ENCODE measurements at regions of chr12 and their contacts with region 1.

Region 1: DNA sequence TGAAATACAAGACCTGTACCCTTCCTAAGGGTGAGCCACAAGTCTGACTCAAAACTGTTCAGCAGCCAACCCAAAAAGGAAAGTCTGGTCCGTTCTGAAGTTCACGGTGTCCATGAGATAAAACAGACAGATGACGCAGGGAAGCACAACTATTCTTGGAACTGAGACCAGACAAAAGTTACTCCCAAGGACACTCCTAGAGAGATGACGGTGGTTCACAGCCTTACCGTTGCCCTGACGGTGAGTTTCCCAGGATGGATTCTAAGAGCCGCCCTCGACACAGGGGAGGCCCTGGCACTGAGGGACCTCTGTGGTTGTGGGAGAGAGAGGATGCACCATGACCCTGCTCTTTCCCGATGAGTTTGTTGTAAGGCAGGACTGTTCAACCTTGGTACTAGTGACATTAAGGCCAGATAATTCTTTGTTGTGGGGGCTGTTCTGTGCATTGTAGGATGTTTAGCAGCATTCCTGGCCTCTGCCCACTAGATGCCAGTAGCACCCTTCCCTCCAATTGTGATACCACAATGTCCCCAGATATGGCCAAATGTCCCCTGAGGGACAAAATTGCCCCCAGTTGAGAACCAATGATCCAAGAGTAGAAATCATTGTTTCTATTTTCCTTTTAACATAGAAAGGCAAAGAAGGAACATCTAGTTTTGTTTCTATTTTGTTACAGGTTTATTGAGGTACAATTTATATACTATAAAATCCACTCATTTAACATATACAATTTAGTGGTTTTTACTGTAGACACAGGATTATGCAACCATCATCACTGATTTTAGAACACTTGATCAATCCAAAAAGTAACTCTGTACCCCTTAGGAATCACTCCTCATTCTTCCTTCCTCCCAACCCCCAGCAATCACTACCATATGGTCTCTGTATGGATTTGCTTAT is 23.0 kb downstream of the OR10P1 start:
- DNase-seq: peak; percentile 36
- H3K4me3 ChIP-seq: no peak overlapping the region
- H3K27ac ChIP-seq: no peak overlapping the region
- H3K4me1 ChIP-seq: no peaks in the 10 kb centered on the region
- H3K27me3 ChIP-seq: peaks cover 15% of the 10 kb centered on the region; the same call in 1 of the 2 replicates
- CTCF ChIP-seq: peak; percentile 66
- EP300 ChIP-seq: no peak
- RAD21 ChIP-seq: peak; percentile 82

Region 2: DNA sequence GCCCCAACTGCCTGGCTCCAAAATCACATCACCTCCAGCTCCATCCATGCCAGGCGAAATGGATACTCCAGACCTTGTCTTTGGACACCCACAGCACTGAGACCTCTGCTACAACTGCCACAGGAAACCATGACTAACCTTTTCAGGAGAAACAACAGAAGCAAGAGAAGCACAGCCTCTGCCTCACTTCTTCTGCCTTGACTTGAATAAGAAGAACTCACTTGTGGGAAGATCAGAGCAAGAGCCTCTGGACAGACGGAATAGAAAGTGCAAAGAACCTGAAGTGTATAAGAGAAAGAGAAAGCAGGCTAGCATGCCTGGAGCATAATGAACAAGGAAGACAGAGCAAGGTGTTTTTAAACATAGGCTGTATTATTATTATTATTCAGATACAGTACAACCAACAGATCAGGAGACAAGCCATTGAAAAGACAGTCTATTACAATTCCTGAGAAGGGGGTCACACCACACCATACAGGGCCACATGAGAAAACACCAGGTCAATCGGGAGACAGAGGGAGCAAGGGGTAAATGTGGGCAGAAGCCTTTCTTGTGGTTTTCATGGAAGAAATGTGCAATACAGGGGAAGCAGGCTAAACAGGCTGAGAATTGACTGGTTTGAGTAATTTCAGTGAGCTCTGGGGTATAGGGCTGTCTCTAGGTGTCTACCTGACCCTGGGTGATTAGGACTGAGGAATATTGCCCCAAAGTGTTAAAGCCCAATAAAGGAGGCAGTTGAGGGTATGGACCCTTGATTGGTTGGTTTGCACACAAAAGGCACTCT is 30.5 kb before region 1 on chr12:
- CTCF ChIA-PET with region 1: interaction called, 12 read pairs
- POLR2A ChIA-PET with region 1: no interaction called
- DNase-seq: no peak
- H3K4me3 ChIP-seq: no peak overlapping the region
- H3K27ac ChIP-seq: no peak overlapping the region
- H3K4me1 ChIP-seq: no peaks in the 10 kb centered on the region
- H3K27me3 ChIP-seq: peaks cover 70% of the 10 kb centered on the region; the same call in 1 of the 2 replicates
- CTCF ChIP-seq: no peak
- EP300 ChIP-seq: no peak
- RAD21 ChIP-seq: no peak

Region 3: DNA sequence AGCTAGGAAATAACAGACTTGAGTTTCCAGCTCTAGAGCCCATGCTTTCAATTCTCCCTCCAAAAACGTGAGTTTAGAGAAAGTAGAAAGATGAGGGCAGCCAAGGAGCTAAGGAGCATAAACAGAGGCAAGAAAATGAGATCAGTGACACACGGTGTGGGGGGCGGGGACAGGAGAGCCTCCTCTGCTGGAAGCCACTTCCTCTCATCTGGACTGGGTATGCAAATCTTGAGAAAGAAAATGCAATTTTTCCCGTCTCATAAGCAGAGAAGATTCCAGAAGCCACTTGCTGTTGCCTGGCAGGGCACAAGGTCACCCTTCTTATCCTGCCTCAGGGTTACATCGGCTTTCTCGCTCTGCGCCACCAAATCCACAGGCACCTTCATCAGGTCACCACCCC is 17.1 kb before region 1 on chr12:
- CTCF ChIA-PET with region 1: interaction called, 91 read pairs
- POLR2A ChIA-PET with region 1: interaction called, 5 read pairs
- DNase-seq: no peak
- H3K4me3 ChIP-seq: no peak overlapping the region
- H3K27ac ChIP-seq: no peak overlapping the region
- H3K4me1 ChIP-seq: peaks cover 0 to 3% of the 10 kb centered on the region in 2 experiments; a peak in 1 of 4 replicates
- H3K27me3 ChIP-seq: peaks cover 37% of the 10 kb centered on the region
- CTCF ChIP-seq: no peak
- EP300 ChIP-seq: no peak
- RAD21 ChIP-seq: no peak

Region 4: GRCh38 chr12:55670276-55670675 is 10.5 kb after region 1 on chr12:
- CTCF ChIA-PET with region 1: interaction called, 22 read pairs
- POLR2A ChIA-PET with region 1: no interaction called
- DNase-seq: no peak
- H3K4me3 ChIP-seq: no peak overlapping the region
- H3K27ac ChIP-seq: no peak overlapping the region
- H3K4me1 ChIP-seq: no peaks in the 10 kb centered on the region
- H3K27me3 ChIP-seq: peaks cover 23% of the 10 kb centered on the region; the same call in 1 of the 2 replicates
- CTCF ChIP-seq: no peak
- EP300 ChIP-seq: no peak
- RAD21 ChIP-seq: no peak

Region 5: DNA sequence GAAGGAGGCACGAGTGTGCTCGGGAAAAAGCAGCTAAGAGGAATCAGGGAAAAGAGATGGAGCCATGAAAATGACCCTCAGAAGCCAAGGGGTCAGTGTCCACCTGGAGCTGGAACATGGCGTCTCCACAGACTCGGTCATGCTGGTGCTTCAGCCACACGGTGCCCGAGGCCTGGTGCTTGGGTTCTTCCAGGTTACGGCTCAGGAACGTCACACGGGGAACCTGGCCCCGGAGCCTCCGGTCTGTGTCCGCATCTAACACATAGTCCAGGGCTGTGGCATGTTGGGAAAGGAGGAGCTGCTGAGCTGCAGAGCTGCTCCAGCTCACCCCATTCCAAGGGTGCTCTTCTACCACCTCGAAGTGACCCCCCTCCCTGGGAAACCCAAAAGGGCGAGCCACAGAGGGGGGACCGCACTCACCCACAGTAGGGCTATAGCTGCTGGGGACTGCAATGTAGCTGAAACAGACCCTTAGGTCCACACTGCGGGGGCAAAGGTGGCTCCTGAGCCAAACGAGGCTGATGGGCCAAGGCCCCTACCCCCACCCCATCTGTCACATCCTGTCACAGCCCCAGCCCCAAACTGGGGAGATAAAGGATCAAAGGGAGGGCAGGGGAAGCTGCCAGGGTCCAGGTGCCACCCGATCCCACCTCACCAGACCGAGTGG is 37.2 kb after region 1 on chr12:
- CTCF ChIA-PET with region 1: interaction called, 12 read pairs
- POLR2A ChIA-PET with region 1: no interaction called
- DNase-seq: no peak
- H3K4me3 ChIP-seq: no peak overlapping the region
- H3K27ac ChIP-seq: no peak overlapping the region
- H3K4me1 ChIP-seq: peaks cover 0 to 3% of the 10 kb centered on the region in 2 experiments; a peak in 1 of 4 replicates
- H3K27me3 ChIP-seq: no peaks in the 10 kb centered on the region
- CTCF ChIP-seq: no peak
- EP300 ChIP-seq: no peak
- RAD21 ChIP-seq: no peak

Region 6: GRCh38 chr12:55715833-55716581 is 56.3 kb after region 1 on chr12 and contains the start of gene BLOC1S1:
- CTCF ChIA-PET with region 1: interaction called, 51 read pairs
- POLR2A ChIA-PET with region 1: no interaction called
- DNase-seq: peak; percentile 96
- H3K4me3 ChIP-seq: peak within 1 kb of the TSS; percentile 67 to 92
- H3K27ac ChIP-seq: peak within 1 kb of the TSS; percentile 87 to 92
- H3K4me1 ChIP-seq: peaks cover 29% of the 10 kb centered on the region in 2 experiments
- H3K27me3 ChIP-seq: no peaks in the 10 kb centered on the region
- CTCF ChIP-seq: 0 out of 2 replicates have a peak, but pooled peaks have one; percentile 9
- EP300 ChIP-seq: peak in 1 of 2 experiments; percentile 56; a peak in 1 of 4 replicates
- RAD21 ChIP-seq: no peak
- polyA plus RNA-seq, gene BLOC1S1: 277 and 331 TPM in 2 replicates

Region 7: GRCh38 chr12:55728939-55729823 is 69.4 kb after region 1 on chr12 and contains the start of gene CD63:
- CTCF ChIA-PET with region 1: interaction called, 71 read pairs
- POLR2A ChIA-PET with region 1: interaction called, 3 read pairs
- DNase-seq: peak; percentile 93
- H3K4me3 ChIP-seq: peak within 1 kb of the TSS; percentile 74 to 97
- H3K27ac ChIP-seq: peak within 1 kb of the TSS; percentile 97 to 100
- H3K4me1 ChIP-seq: peaks cover 0 to 26% of the 10 kb centered on the region in 2 experiments; a peak in 1 of 4 replicates
- H3K27me3 ChIP-seq: no peaks in the 10 kb centered on the region
- CTCF ChIP-seq: no peak
- EP300 ChIP-seq: peak in 1 of 2 experiments; percentile 6; a peak in 1 of 4 replicates
- RAD21 ChIP-seq: no peak
- polyA plus RNA-seq, gene CD63: 1,022 and 1,465 TPM in 2 replicates

Region 8: GRCh38 chr12:55885113-55885512 is 225.4 kb after region 1 on chr12:
- CTCF ChIA-PET with region 1: no interaction called
- POLR2A ChIA-PET with region 1: no interaction called
- DNase-seq: no peak
- H3K4me3 ChIP-seq: no peak overlapping the region
- H3K27ac ChIP-seq: no peak overlapping the region
- H3K4me1 ChIP-seq: no peaks in the 10 kb centered on the region
- H3K27me3 ChIP-seq: no peaks in the 10 kb centered on the region
- CTCF ChIP-seq: no peak
- EP300 ChIP-seq: no peak
- RAD21 ChIP-seq: no peak

Region 9: DNA sequence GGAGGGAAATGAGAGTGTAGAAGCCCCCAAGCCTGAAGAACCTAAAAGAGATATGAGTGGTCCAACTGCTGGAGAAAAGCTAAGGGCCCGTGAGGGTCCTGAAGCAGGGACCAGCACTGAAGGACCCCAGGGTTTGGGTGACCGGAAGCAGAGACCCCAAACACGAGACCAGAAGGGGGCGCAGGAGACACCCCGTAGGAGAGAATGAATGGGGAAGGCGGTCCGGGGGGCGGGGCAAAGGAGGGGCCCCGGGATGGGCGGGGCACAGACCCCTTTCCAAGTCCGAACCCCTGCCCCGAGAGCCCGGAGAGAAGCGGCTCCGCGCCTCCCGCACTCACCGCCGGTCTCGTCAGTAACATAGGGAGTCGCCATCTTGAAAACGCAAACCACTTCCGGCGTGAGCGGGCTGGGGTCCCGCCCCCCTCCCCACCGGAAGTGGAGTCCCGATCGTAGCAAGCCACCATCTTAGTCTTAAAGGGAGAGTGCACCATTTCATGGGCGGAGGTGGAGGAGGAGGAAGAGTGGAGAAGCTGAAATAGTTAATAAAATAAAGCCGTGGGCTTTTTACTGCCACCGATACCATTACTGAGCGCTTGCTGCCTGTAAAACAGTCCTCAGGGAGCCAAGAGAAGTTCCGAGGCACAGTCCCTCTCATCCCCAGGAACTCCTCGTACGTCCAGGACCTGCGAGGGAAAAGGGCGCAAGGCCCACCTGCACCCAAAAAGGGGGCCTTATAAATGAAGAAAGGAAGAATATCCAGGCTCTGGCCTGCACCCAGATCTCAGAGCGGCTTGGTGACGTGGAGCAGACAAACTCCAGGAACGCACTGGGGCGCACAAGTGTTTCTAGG is 267.2 kb after region 1 on chr12:
- CTCF ChIA-PET with region 1: no interaction called
- POLR2A ChIA-PET with region 1: no interaction called
- DNase-seq: peak; percentile 96
- H3K4me3 ChIP-seq: peak overlapping the region; percentile 90 to 94
- H3K27ac ChIP-seq: peak overlapping the region; percentile 94 to 98
- H3K4me1 ChIP-seq: peaks cover 21 to 28% of the 10 kb centered on the region in 2 experiments; a peak in 3 of 4 replicates
- H3K27me3 ChIP-seq: no peaks in the 10 kb centered on the region
- CTCF ChIP-seq: peak; percentile 97
- EP300 ChIP-seq: no peak
- RAD21 ChIP-seq: no peak; the same call in 1 of the 2 replicates

Measured in SK-N-SH (cell line).